CD4-positive, alpha-beta memory T cell (primary cell): ENCODE measurements at regions of chr12 and their contacts with region 1.

Region 1: GRCh38 chr12:2691006-2691344 is 103.8 kb upstream of the FKBP4 start:
- DNase-seq: peak; percentile 55 to 70 (median 62)
- H3K4me3 ChIP-seq: peak overlapping the region; percentile 42 to 73
- H3K4me3 Mint-ChIP-seq: peak overlapping the region; percentile 89 to 96 (median 93)
- H3K27ac ChIP-seq: peak overlapping the region; percentile 62
- H3K27ac Mint-ChIP-seq: peak overlapping the region; percentile 79 to 96 (median 91)
- H3K4me1 ChIP-seq: peaks cover 34% of the 10 kb centered on the region
- H3K4me1 Mint-ChIP-seq: peaks cover 24 to 54% (median 40%) of the 10 kb centered on the region in 4 donors
- H3K27me3 ChIP-seq: no peaks in the 10 kb centered on the region
- H3K27me3 Mint-ChIP-seq: peaks cover 0 to 4% of the 10 kb centered on the region in 2 donors

Region 2: GRCh38 chr12:2640705-2641104 is 50.3 kb before region 1 on chr12:
- CTCF ChIA-PET with region 1: no interaction called
- POLR2A ChIA-PET with region 1: no interaction called
- intact Hi-C with region 1: no loop called
- DNase-seq: no peak
- H3K4me3 ChIP-seq: no peak overlapping the region
- H3K4me3 Mint-ChIP-seq: no peak overlapping the region
- H3K27ac ChIP-seq: no peak overlapping the region
- H3K27ac Mint-ChIP-seq: no peak overlapping the region
- H3K4me1 ChIP-seq: peaks cover 17% of the 10 kb centered on the region
- H3K4me1 Mint-ChIP-seq: peaks cover 12 to 30% (median 17%) of the 10 kb centered on the region in 4 donors
- H3K27me3 ChIP-seq: peaks cover 5% of the 10 kb centered on the region
- H3K27me3 Mint-ChIP-seq: peaks cover 15 to 40% of the 10 kb centered on the region in 2 donors

Region 3: GRCh38 chr12:2673966-2674810 is 16.8 kb before region 1 on chr12:
- CTCF ChIA-PET with region 1: no interaction called
- POLR2A ChIA-PET with region 1: no interaction called
- intact Hi-C with region 1: no loop called
- DNase-seq: no peak
- H3K4me3 ChIP-seq: no peak overlapping the region
- H3K4me3 Mint-ChIP-seq: no peak overlapping the region
- H3K27ac ChIP-seq: no peak overlapping the region
- H3K27ac Mint-ChIP-seq: no peak overlapping the region
- H3K4me1 ChIP-seq: no peaks in the 10 kb centered on the region
- H3K4me1 Mint-ChIP-seq: no peaks in the 10 kb centered on the region
- H3K27me3 ChIP-seq: no peaks in the 10 kb centered on the region
- H3K27me3 Mint-ChIP-seq: no peaks in the 10 kb centered on the region

Region 4: DNA sequence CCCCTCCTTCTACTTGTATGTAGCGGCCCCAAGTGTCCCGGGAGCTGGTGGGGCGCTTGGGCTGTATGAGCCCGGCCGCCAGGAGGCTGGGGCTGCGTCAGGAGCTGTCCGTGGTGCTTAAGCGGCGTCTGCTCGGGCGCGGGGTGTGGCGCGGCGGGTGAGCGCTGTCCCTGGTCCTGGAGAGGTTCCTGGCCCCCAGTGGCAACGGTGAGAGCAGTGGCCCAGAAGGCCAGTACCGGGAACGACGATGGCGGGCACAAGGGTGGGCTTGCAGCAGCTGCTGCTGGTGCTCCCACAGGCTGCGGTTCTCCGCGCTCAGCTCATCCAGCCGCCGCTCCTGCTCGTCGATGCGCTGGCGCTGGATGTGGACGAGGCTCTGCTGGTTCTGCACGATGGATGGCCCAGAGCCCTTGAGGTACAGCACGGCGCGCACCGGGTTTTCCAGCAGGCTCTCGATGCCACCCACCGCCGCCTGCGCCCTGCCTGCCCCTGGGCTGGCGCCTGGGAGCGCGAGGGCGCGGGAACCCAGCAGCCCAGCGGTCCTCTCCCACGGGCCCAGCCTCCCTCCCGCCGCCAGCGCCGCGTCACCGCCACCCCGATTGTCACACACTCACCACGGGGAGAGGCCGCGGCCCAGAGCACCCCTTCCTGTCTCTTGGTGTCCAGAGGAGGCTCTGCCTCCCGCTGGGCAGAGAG is 61.8 kb after region 1 on chr12:
- CTCF ChIA-PET with region 1: no interaction called
- POLR2A ChIA-PET with region 1: interaction called, 3 read pairs
- intact Hi-C with region 1: loop called (anchors 1 kb)
- DNase-seq: peak; percentile 71 to 74 (median 72)
- H3K4me3 ChIP-seq: no peak overlapping the region
- H3K4me3 Mint-ChIP-seq: no peak overlapping the region
- H3K27ac ChIP-seq: no peak overlapping the region
- H3K27ac Mint-ChIP-seq: peak overlapping the region in 1 of 7 donors; percentile 1
- H3K4me1 ChIP-seq: no peaks in the 10 kb centered on the region
- H3K4me1 Mint-ChIP-seq: peaks cover 0 to 7% (median under 1%) of the 10 kb centered on the region in 4 donors
- H3K27me3 ChIP-seq: no peaks in the 10 kb centered on the region
- H3K27me3 Mint-ChIP-seq: peaks cover 24 to 36% of the 10 kb centered on the region in 2 donors

Region 5: DNA sequence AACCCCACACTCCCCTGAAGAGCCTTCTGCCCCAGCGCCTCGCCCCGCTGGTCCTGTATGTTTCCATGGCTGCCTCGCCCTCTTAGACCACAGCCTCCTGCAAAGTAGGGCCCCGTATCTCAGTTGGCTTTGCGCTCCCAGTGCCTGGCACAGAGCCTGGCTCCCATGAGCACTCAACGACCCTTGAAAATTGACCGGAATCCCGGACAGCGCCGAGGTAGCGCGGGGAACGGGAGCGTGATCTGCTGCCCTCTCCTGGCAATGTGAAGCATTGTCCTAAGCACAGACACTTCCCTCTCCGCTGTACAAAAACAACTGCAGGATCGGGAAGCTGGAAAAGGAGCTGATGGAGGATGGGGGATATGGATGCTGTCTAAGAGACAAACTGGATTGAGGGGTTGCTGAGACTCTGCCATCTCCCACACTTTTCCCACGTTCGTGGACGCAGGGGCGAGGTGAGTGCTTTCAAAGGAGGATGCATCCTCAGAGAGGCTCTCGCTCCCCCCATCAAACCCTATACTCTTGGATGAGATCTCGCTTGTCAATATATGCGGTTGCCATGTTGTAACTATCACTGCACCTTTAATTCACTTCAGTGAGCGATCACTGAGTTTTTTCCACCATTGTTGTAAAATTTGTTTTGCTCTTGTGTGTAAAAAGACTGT is 93.1 kb after region 1 on chr12:
- CTCF ChIA-PET with region 1: interaction called, 121 read pairs
- POLR2A ChIA-PET with region 1: interaction called, 6 read pairs
- intact Hi-C with region 1: no loop called
- DNase-seq: peak; percentile 38 to 51 (median 45)
- H3K4me3 ChIP-seq: no peak overlapping the region
- H3K4me3 Mint-ChIP-seq: peak overlapping the region; percentile 70 to 92 (median 83)
- H3K27ac ChIP-seq: no peak overlapping the region
- H3K27ac Mint-ChIP-seq: peak overlapping the region in 3 of 7 donors; percentile 53 to 79 (median 55)
- H3K4me1 ChIP-seq: peaks cover 9% of the 10 kb centered on the region
- H3K4me1 Mint-ChIP-seq: peaks cover 9 to 13% (median 11%) of the 10 kb centered on the region in 4 donors
- H3K27me3 ChIP-seq: no peaks in the 10 kb centered on the region
- H3K27me3 Mint-ChIP-seq: peaks cover 9 to 17% of the 10 kb centered on the region in 2 donors

Region 6: GRCh38 chr12:2794736-2795289 is 103.8 kb after region 1 on chr12 and contains the start of gene FKBP4:
- CTCF ChIA-PET with region 1: interaction called, 7 read pairs
- POLR2A ChIA-PET with region 1: interaction called, 55 read pairs
- intact Hi-C with region 1: loop called (anchors 1 kb)
- DNase-seq: peak; percentile 83 to 92 (median 86)
- H3K4me3 ChIP-seq: peak within 1 kb of the TSS; percentile 81 to 83
- H3K4me3 Mint-ChIP-seq: peak within 1 kb of the TSS; percentile 91 to 97 (median 94)
- H3K27ac ChIP-seq: peak within 1 kb of the TSS; percentile 55
- H3K27ac Mint-ChIP-seq: peak within 1 kb of the TSS; percentile 77 to 96 (median 90)
- H3K4me1 ChIP-seq: peaks cover 11% of the 10 kb centered on the region
- H3K4me1 Mint-ChIP-seq: peaks cover 11 to 36% (median 14%) of the 10 kb centered on the region in 4 donors
- H3K27me3 ChIP-seq: no peaks in the 10 kb centered on the region
- H3K27me3 Mint-ChIP-seq: no peaks in the 10 kb centered on the region
- total RNA-seq, gene FKBP4: 51.3 to 53.3 TPM

Region 7: DNA sequence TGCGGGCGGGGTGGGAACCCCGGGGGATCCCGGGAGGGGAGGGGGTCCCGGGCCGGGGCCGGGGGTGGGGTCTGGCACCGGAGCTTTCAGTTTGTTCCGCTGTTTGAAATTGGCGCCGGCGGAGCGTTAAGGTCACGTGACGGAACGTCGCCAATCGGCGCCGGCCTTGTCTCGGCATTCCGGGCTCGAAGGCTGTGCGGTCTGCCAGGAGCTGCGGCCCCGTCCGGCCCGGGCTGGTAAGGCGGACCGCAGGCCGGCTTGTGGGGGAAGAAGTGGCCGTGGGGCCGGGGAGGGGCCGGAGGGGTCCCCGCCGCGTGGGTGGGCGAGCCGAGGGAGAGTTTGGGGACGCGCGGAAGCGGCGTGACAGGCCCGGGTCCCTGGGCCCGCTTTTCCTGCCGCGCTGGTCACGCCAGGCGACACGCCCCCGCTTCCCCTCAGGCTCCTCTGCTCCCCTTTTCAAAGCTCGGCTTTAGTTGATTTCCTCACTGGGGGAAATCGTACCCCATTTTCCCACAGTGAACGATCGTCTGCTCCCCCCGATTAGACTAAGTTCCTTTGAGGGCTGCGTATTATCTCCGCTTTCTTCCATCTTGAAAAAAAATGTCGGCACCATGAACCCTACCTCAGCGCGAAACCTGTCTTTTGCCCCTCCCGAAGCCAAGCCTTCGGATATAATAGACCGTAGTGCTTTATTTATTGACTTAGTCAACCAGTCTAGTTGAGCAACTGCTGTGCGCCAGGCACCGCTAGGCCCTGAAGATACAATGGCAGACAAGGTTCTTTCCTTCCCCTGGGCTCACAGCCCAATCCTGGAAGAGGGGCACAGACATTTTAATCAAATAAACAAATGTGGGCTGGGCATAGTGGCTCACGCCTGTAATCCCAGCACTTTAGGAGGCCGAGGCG is 186.3 kb after region 1 on chr12 and contains the starts of genes FOXM1 and RHNO1:
- CTCF ChIA-PET with region 1: no interaction called
- POLR2A ChIA-PET with region 1: interaction called, 11 read pairs
- intact Hi-C with region 1: loop called (anchors 5 kb)
- DNase-seq: peak; percentile 88 to 92 (median 89)
- H3K4me3 ChIP-seq: peak within 1 kb of the TSS; percentile 92 to 98
- H3K4me3 Mint-ChIP-seq: peak within 1 kb of the TSS; percentile 97 to 100 (median 99)
- H3K27ac ChIP-seq: peak within 1 kb of the TSS; percentile 96
- H3K27ac Mint-ChIP-seq: peak within 1 kb of the TSS; percentile 98 to 100 (median 99)
- H3K4me1 ChIP-seq: peaks cover 38% of the 10 kb centered on the region
- H3K4me1 Mint-ChIP-seq: peaks cover 25 to 44% (median 33%) of the 10 kb centered on the region in 4 donors
- H3K27me3 ChIP-seq: no peaks in the 10 kb centered on the region
- H3K27me3 Mint-ChIP-seq: no peaks in the 10 kb centered on the region
- total RNA-seq, gene FOXM1: 0.30 to 0.44 TPM
- total RNA-seq, gene RHNO1: 31.2 to 35.7 TPM

Region 8: DNA sequence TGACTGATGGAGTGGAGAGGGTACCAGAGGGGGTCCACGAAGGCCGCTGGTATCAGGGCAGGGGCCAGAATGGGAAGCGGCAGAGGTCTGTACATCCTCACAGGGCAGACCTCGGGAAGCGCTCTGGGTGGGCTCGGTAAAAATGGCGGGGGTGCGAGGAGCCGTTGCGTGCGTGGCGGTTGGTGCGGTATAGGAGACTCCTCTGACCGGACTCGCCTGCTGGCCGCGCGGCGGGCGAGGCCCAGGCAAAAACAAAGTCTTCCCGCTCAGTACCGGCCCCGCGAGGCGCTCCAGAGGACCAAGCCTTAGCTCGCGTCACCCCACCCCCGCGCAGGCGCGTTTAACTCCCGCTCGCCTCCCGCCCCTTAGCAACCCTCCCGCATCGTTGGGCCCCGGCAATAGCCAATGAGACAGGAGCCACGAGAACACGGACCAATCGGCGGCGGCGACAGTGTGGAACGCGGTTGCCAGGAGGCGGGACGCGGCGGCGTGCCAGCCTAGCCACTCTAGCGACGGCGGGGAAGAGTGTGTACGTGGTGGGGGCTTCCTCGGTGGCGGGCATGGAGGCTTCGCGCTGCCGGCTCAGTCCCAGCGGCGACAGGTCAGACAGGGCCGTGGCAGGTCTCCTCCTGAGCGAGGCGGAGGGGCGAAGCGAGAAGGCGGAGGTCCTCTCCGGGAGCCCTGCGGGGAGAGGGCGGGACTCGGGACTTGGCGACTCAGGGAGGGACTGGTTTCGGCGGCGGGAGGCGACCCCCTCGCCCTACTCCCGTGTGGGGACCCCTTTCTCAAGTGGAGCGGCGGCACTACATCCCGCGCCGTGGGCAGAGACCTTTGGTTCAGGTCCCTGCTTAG is 199.6 kb after region 1 on chr12 and contains the start of gene TULP3:
- CTCF ChIA-PET with region 1: interaction called, 3 read pairs
- POLR2A ChIA-PET with region 1: interaction called, 3 read pairs
- intact Hi-C with region 1: loop called (anchors 5 kb)
- DNase-seq: peak; percentile 98 to 99 (median 98)
- H3K4me3 ChIP-seq: peak within 1 kb of the TSS; percentile 49 to 92
- H3K4me3 Mint-ChIP-seq: peak within 1 kb of the TSS; percentile 90 to 99 (median 96)
- H3K27ac ChIP-seq: peak within 1 kb of the TSS; percentile 83
- H3K27ac Mint-ChIP-seq: peak within 1 kb of the TSS; percentile 90 to 99 (median 93)
- H3K4me1 ChIP-seq: peaks cover 17% of the 10 kb centered on the region
- H3K4me1 Mint-ChIP-seq: peaks cover 17 to 37% (median 25%) of the 10 kb centered on the region in 4 donors
- H3K27me3 ChIP-seq: no peaks in the 10 kb centered on the region
- H3K27me3 Mint-ChIP-seq: peaks cover 0 to 2% of the 10 kb centered on the region in 2 donors
- total RNA-seq, gene TULP3: 6.7 to 9.1 TPM